HepG2 (cell line): ENCODE measurements at regions of chr10 and their contacts with region 1.

Region 1: DNA sequence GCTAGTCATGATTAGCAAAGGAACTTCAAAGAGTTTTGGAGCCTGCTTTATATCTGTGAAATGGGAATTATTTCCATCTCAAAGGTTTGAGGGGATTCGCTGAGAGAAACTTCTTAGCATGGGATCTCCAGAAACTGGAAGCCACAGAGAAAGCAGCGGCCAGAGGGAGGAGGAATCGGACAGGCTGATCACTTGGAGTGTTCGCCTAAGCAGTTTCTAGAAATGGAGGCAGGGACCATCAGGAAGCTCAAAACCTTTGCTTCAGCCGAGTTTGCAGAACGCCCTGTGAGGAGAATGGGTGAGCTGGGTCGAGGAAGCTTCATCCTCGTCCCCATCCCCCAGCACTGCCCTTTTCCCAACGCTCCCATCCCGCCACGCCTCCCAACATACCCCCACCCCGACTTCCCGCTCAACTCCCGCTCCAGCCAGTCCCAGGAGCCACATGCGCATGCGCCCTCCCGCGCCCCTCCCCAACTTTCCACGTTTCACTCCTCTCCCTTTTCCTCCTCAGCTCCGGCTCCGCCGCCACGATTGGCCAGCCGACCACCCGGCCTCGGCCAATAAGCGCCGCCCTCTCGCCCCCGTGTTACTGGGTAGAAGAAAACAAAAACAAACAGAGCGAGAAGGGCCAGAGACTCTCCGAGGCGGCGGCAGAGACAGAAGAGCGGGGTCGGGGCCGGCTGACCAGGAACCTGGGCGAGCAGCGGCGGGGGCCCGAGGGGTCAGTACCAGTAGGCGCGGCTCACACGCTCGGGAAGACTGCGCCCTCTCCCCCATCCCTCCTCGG is at the start of gene PDCD4:
- DNase-seq: peak; percentile 94
- ATAC-seq: peak; percentile 93
- H3K4me3 ChIP-seq: peak within 1 kb of the TSS; percentile 72 to 82 (median 76)
- H3K27ac ChIP-seq: peak within 1 kb of the TSS; percentile 92
- H3K4me1 ChIP-seq: peaks cover 45% of the 10 kb centered on the region
- H3K27me3 ChIP-seq: no peaks in the 10 kb centered on the region
- CTCF ChIP-seq: no peak
- EP300 ChIP-seq: peak in 1 of 2 experiments; percentile 75; a peak in 2 of 4 replicates
- POLR2A ChIP-seq: peak; percentile 70 to 80
- RAD21 ChIP-seq: no peak
- total RNA-seq, gene PDCD4: 56.2 and 92.8 TPM in 2 replicates

Region 2: GRCh38 chr10:110746254-110746826 is 125.2 kb before region 1 on chr10:
- CTCF ChIA-PET with region 1: no interaction called
- POLR2A ChIA-PET with region 1: interaction called, 3 read pairs
- in situ Hi-C with region 1: no loop called
- intact Hi-C with region 1: loop called (anchors 5 kb)
- DNase-seq: peak; percentile 56
- ATAC-seq: peak; percentile 90
- H3K4me3 ChIP-seq: no peak overlapping the region
- H3K27ac ChIP-seq: no peak overlapping the region
- H3K4me1 ChIP-seq: peaks cover 14% of the 10 kb centered on the region
- H3K27me3 ChIP-seq: 0 out of 5 replicates have a peak, but pooled peaks cover 0 to 3% of the 10 kb centered on the region in 2 experiments
- CTCF ChIP-seq: peak; percentile 85
- EP300 ChIP-seq: no peak
- POLR2A ChIP-seq: no peak
- RAD21 ChIP-seq: peak; percentile 86

Region 3: DNA sequence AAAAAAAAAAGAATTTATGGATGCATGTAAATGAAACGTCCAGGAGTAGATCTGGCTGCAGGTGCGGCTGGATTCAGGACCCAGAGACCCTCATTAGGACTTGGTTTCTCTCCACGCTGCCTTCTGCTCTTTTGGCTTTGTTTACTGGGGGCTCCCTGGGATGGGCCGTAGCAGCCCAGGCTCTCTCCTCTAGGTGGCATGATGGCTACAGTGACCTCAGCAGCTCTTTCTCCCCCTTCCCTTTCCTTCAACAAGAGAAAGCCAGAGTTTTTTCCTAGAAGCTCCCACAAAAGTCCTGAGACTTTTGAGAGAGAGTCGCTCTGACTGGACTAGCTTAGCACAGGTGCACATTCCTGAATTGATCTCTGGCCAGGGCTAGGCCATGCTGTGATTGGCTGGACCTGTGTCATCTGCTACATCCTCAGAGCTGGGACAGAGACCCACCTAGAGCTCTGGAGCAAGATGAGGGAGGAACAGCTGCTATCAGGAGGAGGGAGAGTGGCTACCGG is 67.6 kb before region 1 on chr10:
- CTCF ChIA-PET with region 1: no interaction called
- POLR2A ChIA-PET with region 1: interaction called, 16 read pairs
- in situ Hi-C with region 1: no loop called
- intact Hi-C with region 1: loop called (anchors 5 kb)
- DNase-seq: peak; percentile 45
- ATAC-seq: peak; percentile 95
- H3K4me3 ChIP-seq: peak overlapping the region in 1 of 3 experiments; percentile 12; a peak in 1 of 6 replicates
- H3K27ac ChIP-seq: no peak overlapping the region
- H3K4me1 ChIP-seq: peaks cover 22% of the 10 kb centered on the region
- H3K27me3 ChIP-seq: peaks cover 0 to 3% of the 10 kb centered on the region in 2 experiments; a peak in 1 of 5 replicates
- CTCF ChIP-seq: peak; percentile 87
- EP300 ChIP-seq: no peak
- POLR2A ChIP-seq: no peak
- RAD21 ChIP-seq: peak; percentile 83

Region 4: GRCh38 chr10:110834629-110835301 is 36.7 kb before region 1 on chr10:
- CTCF ChIA-PET with region 1: no interaction called
- POLR2A ChIA-PET with region 1: interaction called, 7 read pairs
- in situ Hi-C with region 1: no loop called
- intact Hi-C with region 1: loop called (anchors 5 kb)
- DNase-seq: peak; percentile 50
- ATAC-seq: peak; percentile 26
- H3K4me3 ChIP-seq: peak overlapping the region in 1 of 3 experiments; percentile 62; a peak in 2 of 6 replicates
- H3K27ac ChIP-seq: peak overlapping the region; percentile 34
- H3K4me1 ChIP-seq: peaks cover 89% of the 10 kb centered on the region
- H3K27me3 ChIP-seq: no peaks in the 10 kb centered on the region; a peak in 2 of 5 replicates
- CTCF ChIP-seq: no peak
- EP300 ChIP-seq: no peak
- POLR2A ChIP-seq: no peak
- RAD21 ChIP-seq: no peak

Region 5: DNA sequence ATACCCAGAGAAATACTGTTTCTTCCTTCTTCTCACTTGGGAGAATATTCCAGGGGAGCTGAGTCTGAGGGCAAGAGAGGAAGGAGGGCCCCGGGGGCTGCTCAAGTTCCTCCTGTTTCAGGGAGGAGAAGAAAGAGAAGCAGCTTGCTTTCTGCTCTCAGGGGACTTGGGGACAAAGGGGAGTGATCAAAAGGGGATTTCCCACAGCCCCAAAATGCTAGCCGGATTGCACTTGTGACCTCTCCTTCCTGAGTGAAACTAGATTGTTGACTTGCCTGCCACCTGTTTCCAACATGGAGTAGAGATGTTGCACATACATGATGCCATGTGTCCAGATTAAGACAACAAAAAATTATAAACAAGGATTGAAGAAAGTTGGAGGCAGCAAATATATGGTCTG is 28.5 kb before region 1 on chr10:
- CTCF ChIA-PET with region 1: no interaction called
- POLR2A ChIA-PET with region 1: interaction called, 17 read pairs
- in situ Hi-C with region 1: no loop called
- intact Hi-C with region 1: no loop called
- DNase-seq: no peak
- ATAC-seq: no peak
- H3K4me3 ChIP-seq: no peak overlapping the region
- H3K27ac ChIP-seq: peak overlapping the region; percentile 17
- H3K4me1 ChIP-seq: peaks cover 97% of the 10 kb centered on the region
- H3K27me3 ChIP-seq: no peaks in the 10 kb centered on the region
- CTCF ChIP-seq: no peak
- EP300 ChIP-seq: no peak
- POLR2A ChIP-seq: no peak
- RAD21 ChIP-seq: no peak

Region 6: DNA sequence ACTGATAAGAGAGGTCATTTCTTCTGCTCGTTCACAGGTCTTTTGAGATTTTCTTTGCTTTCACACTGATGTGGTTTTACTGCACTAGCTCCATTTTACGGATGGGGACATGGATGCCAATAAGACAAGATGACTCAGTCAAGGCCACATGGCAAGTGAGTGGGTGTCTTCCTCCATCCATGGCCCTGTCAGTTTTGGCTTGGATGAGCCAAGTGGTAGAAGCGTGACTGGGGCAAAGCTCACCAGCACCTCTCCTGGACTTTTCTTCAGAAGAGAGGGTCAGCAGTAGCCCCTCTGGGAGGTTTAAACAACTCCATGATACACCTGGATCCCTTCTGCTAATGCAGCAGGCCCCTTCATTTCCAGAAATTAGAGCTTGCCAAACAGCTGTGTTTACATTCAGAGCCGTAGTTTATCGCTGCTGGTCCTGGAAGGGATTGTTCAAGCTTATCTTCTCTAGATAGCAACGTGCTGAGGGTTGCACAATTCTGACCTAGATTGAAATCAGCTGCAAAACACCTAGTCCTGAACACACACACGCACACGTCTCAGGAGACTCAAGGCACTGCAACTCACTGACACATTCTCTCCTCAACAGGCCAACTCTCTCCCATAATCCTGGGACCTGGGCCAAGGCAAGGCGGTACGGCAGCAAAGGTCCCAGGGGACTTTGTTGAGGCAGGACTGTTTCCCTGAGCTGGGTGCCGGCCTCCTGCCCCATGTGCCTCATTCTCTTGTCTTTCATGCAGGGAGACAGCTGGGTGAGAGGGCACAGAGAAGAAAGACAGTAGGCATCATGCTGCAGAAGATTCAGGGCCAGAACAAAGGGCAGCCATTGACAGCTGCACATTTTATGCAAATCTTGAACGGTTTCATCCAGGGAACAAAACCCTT is 14.0 kb before region 1 on chr10:
- CTCF ChIA-PET with region 1: no interaction called
- POLR2A ChIA-PET with region 1: interaction called, 53 read pairs
- in situ Hi-C with region 1: no loop called
- intact Hi-C with region 1: no loop called
- DNase-seq: peak; percentile 59
- ATAC-seq: peak; percentile 67
- H3K4me3 ChIP-seq: peak overlapping the region; percentile 4 to 53 (median 51); a peak in 4 of 6 replicates
- H3K27ac ChIP-seq: peak overlapping the region; percentile 5
- H3K4me1 ChIP-seq: peaks cover 68% of the 10 kb centered on the region
- H3K27me3 ChIP-seq: no peaks in the 10 kb centered on the region; a peak in 1 of 5 replicates
- CTCF ChIP-seq: no peak
- EP300 ChIP-seq: peak in 1 of 2 experiments; percentile 49; a peak in 1 of 4 replicates
- POLR2A ChIP-seq: no peak
- RAD21 ChIP-seq: no peak

Region 7: DNA sequence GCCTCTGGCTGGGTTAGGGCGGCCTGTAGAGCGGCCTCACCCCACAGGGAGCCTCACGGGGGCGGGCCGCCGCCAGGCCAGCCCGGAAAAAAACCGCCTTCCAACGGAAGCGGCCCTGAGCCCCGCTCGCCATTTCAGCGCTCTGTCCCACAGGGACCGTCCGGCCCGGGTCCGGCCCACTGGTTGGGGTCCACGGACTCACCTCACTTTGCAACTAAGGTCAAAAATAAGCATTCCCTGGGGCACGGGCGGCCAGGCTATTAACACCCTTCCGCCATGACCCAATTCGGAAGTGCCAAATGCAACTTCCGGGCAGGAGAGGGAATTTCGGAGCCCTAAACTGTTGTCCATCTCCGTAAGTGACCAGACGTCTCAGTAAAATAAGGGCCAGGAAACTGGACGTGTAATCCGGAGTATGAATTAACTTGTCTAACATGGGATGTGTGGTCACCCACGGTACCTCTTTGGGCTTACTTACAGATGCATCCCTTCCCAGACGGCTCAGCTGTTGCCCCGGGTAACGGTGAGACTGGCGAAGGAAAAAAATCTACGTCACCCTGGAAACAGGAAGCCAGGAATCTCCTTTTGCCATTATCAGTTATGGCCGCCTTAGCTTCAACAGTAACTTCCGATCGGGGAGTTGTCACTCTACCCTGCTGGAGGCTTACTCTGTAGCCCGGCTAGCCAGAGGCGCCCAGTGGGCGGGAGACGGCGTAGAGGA is 47.3 kb after region 1 on chr10 and contains the start of gene BBIP1:
- CTCF ChIA-PET with region 1: no interaction called
- POLR2A ChIA-PET with region 1: interaction called, 21 read pairs
- in situ Hi-C with region 1: no loop called
- intact Hi-C with region 1: no loop called
- DNase-seq: peak; percentile 99
- ATAC-seq: peak; percentile 96
- H3K4me3 ChIP-seq: peak within 1 kb of the TSS; percentile 83 to 93 (median 89)
- H3K27ac ChIP-seq: peak within 1 kb of the TSS; percentile 97
- H3K4me1 ChIP-seq: peaks cover 43% of the 10 kb centered on the region
- H3K27me3 ChIP-seq: no peaks in the 10 kb centered on the region; a peak in 1 of 5 replicates
- CTCF ChIP-seq: peak; percentile 40
- EP300 ChIP-seq: 0 out of 4 replicates have a peak, but pooled peaks of 1 of the 2 experiments have one; percentile 28
- POLR2A ChIP-seq: peak; percentile 58 to 77; a peak in 3 of 4 replicates
- RAD21 ChIP-seq: peak; percentile 59
- total RNA-seq, gene BBIP1: 24.1 and 28.9 TPM in 2 replicates